Cardiac septum (tissue), 1 donor: ENCODE measurements at regions of chr19 and their contacts with region 1.

Region 1: GRCh38 chr19:21851596-21852345 is 15.8 kb upstream of the ZNF43 start:
- DNase-seq: peak; percentile 96

Region 2: DNA sequence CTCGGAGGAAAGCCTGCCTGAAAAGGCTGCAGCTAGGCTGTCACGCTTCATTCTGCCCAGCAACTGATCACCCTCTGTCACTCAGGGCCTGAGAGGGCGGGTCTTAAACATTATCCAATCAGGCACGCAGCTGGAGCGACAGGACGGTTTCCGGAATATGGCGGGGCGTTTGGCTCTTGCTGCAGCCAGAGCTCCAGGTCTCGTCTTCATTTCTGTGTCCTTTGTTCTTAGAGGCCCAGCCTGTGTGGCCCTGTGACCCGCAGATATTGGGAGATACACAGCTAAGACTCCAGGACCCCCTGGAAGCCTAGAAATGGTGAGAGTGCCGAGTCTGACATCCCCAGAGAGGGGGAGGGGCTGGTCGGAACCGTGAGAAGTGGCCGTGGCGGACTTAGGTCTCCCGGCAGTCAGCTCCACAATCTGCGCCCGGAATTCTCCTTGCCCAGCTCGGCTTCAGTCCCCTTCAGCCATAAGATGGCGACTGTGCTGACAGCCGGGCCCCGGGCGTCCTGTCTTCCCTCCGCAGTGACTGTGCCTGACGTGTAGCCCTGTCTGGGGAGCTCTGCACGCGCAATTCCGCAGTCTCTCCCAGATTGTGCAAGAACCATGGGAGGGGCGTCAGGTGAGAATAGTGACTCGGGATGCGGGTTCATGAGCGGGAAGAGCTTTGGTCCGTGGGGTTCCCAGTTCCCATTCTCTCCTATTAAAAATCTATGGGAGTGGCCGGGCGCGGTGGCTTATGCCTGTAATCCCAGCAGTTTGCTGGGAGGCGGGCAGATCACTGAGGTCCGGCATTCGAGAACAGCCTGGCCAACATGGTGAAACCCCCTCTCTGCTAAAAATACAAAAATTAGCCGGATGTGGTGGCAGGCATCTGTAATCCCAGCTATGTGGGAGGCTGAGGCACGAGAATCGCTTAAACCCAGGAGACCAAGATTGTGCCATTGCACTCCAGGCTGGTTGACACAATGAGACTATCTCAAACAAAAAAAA is 346.0 kb before region 1 on chr19 and contains the start of gene ZNF429:
- intact Hi-C with region 1: loop called (anchors 10 kb)
- DNase-seq: peak; percentile 96
- total RNA-seq, gene ZNF429: 10.8 TPM

Region 3: DNA sequence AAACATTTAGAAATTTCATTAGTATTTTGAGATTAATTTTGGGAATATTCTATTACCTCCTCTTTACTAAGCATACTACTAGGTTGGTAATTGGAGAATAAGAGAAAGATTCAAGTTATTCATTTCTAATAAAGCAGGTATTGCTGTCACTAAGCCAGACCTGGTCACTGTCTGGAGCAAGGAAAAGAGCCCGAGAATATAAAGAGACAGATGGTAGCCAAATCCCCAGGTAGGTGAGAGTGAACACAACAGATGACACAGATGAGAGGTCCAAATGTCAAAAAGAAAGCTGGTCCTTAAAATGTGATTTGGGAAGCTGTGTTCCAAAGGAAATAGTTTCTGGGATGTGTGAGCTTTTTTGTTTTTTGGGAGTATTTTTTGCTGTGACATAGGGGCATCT is 213.0 kb before region 1 on chr19:
- intact Hi-C with region 1: no loop called
- DNase-seq: no peak

Region 4: DNA sequence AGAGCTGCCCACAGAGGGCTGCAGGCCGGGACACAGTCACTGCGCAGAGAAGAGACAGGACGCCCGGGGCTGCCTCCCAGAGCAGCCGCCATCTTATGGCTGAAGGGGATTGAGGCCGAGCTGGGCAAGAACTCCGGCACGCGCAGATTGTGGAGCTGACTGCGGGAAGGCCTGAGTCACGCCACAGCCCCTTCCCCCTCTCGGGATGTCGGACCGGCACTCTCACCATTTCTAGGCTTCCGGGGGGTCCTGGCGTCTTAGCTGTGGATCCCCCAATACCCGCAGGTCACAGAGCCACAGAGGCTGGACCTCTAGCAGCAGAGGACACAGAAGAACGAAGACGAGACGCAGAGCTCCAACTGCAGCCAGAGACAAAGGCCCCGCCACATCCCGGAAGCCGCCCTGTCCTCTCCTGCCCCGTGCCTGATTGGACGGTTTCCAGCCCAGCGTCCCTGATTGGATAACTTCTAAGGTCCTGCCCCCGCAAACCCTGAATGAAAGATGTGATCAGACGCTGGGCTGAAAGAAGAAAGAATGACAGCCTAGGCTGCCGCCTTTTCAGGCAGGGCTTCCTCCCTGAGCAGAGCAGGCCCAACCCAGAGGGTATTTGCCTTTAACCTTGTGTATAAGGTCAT is 15.8 kb before region 1 on chr19 and contains the start of gene ZNF43:
- intact Hi-C with region 1: loop called (anchors 1 kb)
- DNase-seq: peak; percentile 98
- total RNA-seq, gene ZNF43: 6.3 TPM